Prostate gland (tissue), 2 donors: ENCODE measurements at regions of chr13 and their contacts with region 1.

Region 1: GRCh38 chr13:27424246-27425157 is at the start of gene GTF3A:
- DNase-seq: peak; percentile 72
- H3K4me3 ChIP-seq: peak within 1 kb of the TSS; percentile 54 to 60
- H3K27ac ChIP-seq: peak within 1 kb of the TSS; percentile 86 to 87
- H3K4me1 ChIP-seq: peaks cover 6% of the 10 kb centered on the region
- H3K27me3 ChIP-seq: no peaks in the 10 kb centered on the region
- CTCF ChIP-seq: peak in 1 of 4 experiments; percentile 37
- POLR2A ChIP-seq: peak; percentile 86
- total RNA-seq, gene GTF3A: 95.0 to 142 TPM

Region 2: DNA sequence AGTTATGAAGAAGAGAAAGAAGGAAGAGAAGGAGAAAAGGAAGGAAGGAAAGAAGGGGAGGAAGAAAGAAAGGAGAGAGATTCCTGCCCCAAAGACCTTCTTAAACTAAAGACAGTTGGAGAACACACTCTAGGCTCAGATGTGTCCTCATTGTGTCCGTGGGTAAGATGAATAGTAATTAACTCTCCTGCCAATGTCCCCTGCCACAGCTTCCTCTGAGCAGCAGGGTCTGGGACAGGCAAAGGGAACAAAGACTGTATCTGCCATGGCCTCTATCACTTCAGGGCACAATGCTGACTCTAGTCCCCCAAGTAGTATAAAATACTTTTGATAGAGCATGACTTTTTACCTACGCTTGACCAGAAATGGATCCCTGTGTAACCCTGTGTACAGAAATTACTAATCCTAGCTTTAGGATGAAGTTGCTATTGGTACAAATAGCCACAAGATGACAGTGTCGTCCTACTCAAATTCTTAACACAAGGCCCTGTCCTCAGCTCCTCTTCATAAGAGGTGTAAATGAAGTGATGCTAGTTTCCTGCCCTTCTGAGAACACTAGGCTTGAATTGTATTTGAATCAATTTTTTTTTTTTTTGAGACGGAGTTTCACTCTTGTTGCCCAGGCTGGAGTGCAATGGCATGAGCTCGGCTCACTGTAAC is 477.7 kb before region 1 on chr13:
- intact Hi-C with region 1: loop called (anchors 10 kb)
- DNase-seq: no peak
- H3K4me3 ChIP-seq: no peak overlapping the region
- H3K27ac ChIP-seq: no peak overlapping the region
- H3K4me1 ChIP-seq: no peaks in the 10 kb centered on the region
- H3K27me3 ChIP-seq: no peaks in the 10 kb centered on the region
- CTCF ChIP-seq: peak in 3 of 4 experiments; percentile 50 to 72 (median 66)
- POLR2A ChIP-seq: no peak

Region 3: DNA sequence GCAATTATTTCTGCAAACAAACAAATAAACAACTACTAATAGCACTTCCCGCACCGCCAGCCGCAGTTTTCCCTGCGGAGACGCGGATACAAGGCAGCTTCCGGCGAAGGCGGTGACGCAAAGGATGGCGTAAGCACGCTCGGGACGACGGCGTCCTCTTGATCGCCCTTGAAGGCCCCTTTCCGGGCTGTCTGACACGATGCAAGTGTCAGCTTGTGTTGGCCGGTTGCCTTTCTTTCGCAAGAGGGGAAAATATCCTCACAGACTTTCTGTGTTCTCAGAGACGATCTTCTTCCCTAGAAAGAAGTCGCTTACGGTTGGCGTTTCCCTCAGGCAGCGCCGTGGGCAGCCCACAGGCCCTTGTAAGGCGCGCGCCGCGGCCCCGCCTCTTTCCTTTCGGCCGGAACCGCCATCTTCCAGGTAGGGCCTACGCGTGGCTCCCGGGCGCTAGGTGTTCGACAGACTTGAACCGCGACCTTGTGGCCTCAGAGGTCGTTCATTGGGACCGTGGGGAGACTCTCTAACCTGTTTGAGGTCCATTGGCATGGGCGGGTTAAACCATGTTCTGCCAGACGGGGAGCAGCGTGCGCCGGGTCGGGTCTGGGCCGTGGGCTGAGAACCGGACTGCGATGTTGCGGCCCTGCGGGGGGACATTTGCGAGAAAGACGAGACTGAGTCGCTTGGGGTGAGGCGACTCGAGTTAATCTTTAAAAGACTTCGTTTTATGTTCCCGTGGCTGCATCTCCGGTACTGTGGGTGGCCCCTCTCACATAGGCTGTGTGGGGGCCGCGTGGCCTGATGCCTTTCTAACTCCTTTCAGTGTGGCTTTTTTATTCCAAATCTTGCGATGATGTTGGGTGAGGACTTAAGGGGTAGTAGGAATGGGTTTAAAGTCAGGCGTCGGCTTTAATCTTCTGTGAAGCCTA is 173.1 kb before region 1 on chr13 and contains the start of gene RPL21:
- intact Hi-C with region 1: loop called (anchors 10 kb)
- DNase-seq: peak; percentile 93
- H3K4me3 ChIP-seq: peak within 1 kb of the TSS; percentile 79 to 82
- H3K27ac ChIP-seq: peak within 1 kb of the TSS; percentile 93 to 96
- H3K4me1 ChIP-seq: peaks cover 3% of the 10 kb centered on the region
- H3K27me3 ChIP-seq: no peaks in the 10 kb centered on the region
- CTCF ChIP-seq: peak in 1 of 4 experiments; percentile 15
- POLR2A ChIP-seq: peak; percentile 57
- total RNA-seq, gene RPL21: 338 to 1,109 TPM

Region 4: DNA sequence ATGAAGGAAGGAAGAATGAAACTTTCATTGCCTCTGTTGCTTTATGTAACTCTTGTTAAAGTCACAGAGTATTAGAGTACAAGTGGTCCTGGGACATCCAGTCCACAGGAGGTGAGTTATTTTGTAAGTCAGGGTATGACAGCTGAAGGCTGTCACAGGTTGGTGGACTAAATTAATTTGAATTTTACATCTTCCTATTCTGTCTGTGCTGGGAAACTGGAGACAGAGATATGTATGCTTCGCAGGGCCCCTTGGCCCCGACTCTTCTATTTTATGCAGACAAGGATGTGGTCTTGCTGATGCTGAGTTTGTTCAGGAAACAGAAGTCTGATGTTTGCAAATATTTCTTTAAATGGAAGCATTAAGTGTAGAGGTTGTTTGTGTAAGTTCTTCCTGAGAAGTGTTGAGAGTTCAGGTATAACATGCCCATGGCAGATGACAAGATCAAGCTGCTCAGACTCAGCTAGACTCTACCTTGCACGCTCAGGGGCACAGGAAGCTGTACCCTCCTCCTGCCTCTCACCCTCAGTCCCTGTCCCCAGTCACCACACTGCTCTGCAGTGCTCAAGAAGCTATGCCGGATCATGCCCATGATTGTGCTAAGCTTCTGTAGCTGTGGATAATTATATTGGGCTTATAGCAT is 130.5 kb before region 1 on chr13:
- intact Hi-C with region 1: no loop called
- DNase-seq: no peak
- H3K4me3 ChIP-seq: no peak overlapping the region
- H3K27ac ChIP-seq: no peak overlapping the region
- H3K4me1 ChIP-seq: no peaks in the 10 kb centered on the region
- H3K27me3 ChIP-seq: no peaks in the 10 kb centered on the region
- CTCF ChIP-seq: no peak
- POLR2A ChIP-seq: no peak

Region 5: GRCh38 chr13:27449936-27450828 is 25.7 kb after region 1 on chr13 and contains the start of gene MTIF3:
- intact Hi-C with region 1: loop called (anchors 1 kb)
- DNase-seq: peak; percentile 96
- H3K4me3 ChIP-seq: peak within 1 kb of the TSS; percentile 81 to 95
- H3K27ac ChIP-seq: peak within 1 kb of the TSS; percentile 95 to 98
- H3K4me1 ChIP-seq: no peaks in the 10 kb centered on the region
- H3K27me3 ChIP-seq: no peaks in the 10 kb centered on the region
- CTCF ChIP-seq: peak in 2 of 4 experiments; percentile 9 to 24
- POLR2A ChIP-seq: peak; percentile 88
- total RNA-seq, gene MTIF3: 44.8 to 52.3 TPM

Region 6: GRCh38 chr13:27593267-27593666 is 168.8 kb after region 1 on chr13:
- intact Hi-C with region 1: no loop called
- DNase-seq: no peak
- H3K4me3 ChIP-seq: no peak overlapping the region
- H3K27ac ChIP-seq: no peak overlapping the region
- H3K4me1 ChIP-seq: no peaks in the 10 kb centered on the region
- H3K27me3 ChIP-seq: no peaks in the 10 kb centered on the region
- CTCF ChIP-seq: no peak
- POLR2A ChIP-seq: no peak